Heart right ventricle (tissue), 16 donors: ENCODE measurements at regions of chr7 and their contacts with region 1.

Region 1: DNA sequence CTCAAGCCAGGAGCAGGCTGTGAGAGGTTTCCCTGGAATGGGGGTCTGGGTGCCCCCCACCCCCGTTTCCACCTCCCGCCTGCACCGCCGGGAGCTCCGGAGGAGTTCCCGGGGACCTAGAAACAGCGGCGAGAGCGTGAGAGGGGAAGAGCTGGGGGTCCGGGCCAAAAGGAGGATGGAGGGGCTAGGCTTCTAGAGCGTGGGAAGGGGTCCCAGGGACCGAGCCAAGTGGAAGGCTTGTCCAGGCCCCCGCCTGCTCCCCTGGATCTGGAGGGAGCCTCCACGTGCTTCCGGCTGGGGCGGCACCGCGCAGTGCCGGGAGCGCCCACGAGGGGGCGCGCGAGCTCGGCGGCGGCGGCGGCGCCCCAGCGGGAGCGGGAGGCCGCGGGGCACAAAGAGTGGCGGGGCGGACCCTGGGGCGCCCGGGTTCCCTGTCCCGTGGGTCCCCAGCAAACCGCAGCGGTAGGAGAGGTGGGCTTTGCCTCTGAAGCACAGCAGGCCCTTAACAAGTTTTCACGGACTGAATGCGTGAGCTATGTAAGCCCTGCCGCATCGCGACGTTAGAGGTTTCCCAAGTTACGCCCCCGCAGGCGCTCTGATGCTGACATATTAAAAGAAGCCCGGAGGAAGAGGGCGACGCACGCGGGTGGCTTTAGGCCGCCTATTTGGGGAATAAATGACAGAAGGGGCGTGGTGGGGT is 104.4 kb upstream of the LRRC4 start:
- DNase-seq: peak; percentile 34 to 51
- ATAC-seq: peak; percentile 83 to 96 (median 90)
- H3K4me3 ChIP-seq: peak overlapping the region; percentile 9 to 66 (median 59)
- H3K27ac ChIP-seq: no peak overlapping the region
- H3K4me1 ChIP-seq: peaks cover 4 to 39% (median 15%) of the 10 kb centered on the region in 9 donors
- H3K27me3 ChIP-seq: peaks cover 0 to 80% (median 55%) of the 10 kb centered on the region in 7 donors
- CTCF ChIP-seq: peak; percentile 71 to 100 (median 93)

Region 2: GRCh38 chr7:128197589-128197988 is 61.9 kb after region 1 on chr7:
- intact Hi-C with region 1: loop called in 1 of 10 experiments (anchors 10 kb)
- DNase-seq: no peak
- ATAC-seq: no peak
- H3K4me3 ChIP-seq: no peak overlapping the region
- H3K27ac ChIP-seq: no peak overlapping the region
- H3K4me1 ChIP-seq: peaks cover 5 to 14% (median 7%) of the 10 kb centered on the region in 9 donors
- H3K27me3 ChIP-seq: peaks cover 4 to 54% (median 48%) of the 10 kb centered on the region in 7 donors
- CTCF ChIP-seq: no peak